ENCODE measurements at regions of chr18 and their contacts with region 1.

Region 1: DNA sequence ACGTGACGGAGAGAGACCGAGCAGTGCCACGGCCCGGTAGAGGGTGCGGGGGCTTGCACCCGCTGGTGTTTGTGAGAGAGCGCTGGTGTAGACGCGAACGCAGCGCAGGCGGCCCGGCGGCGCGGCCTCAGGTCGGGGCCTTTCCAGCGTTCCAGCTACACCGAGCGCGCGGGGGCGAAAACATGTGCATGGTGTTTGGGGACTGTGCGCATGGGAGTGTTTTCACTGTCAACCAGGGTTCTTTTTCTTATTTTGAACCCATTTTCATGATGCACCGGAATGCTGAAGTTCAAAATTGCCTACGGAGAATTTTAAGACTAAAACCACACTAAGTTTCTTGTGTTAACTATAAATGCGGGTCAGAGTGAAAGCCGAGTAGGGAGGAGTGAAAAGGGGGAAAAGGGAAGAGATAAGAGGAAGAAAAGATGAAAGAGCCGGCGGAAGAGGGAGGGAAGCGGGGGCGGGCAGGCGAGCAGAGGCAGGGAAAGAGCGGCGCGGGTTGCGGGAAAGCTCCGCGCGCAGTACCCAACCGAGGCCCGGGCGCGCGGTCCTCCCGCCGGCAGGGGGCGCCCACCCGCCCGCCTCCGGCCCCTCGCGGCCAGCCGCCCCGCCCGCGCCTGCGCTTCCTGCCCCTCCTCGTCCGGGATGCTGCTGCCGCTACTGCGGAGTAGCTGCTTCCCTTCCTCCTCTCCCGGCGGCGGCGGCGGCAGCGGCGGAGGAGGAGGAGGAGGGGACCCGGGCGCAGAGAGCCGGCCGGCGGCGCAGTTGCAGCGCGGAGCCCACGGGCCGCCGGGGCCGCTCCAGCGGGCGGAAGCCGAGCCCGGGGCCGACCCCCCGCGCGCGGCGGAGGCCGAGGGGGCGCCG is at the start of gene RAB12:
- DNase-seq: peak; percentile 87 to 91
- ATAC-seq: peak; percentile 87 to 97 (median 90)
- H3K4me3 ChIP-seq: peak within 1 kb of the TSS; percentile 68 to 97 (median 90)
- H3K27ac ChIP-seq: peak within 1 kb of the TSS; percentile 71 to 89 (median 81)
- H3K4me1 ChIP-seq: peaks cover 0 to 52% (median 37%) of the 10 kb centered on the region in 9 donors
- H3K27me3 ChIP-seq: no peaks in the 10 kb centered on the region
- CTCF ChIP-seq: peak; percentile 53 to 93 (median 72)
- total RNA-seq, gene RAB12: 90.1 to 121 (median 106) TPM

Region 2: DNA sequence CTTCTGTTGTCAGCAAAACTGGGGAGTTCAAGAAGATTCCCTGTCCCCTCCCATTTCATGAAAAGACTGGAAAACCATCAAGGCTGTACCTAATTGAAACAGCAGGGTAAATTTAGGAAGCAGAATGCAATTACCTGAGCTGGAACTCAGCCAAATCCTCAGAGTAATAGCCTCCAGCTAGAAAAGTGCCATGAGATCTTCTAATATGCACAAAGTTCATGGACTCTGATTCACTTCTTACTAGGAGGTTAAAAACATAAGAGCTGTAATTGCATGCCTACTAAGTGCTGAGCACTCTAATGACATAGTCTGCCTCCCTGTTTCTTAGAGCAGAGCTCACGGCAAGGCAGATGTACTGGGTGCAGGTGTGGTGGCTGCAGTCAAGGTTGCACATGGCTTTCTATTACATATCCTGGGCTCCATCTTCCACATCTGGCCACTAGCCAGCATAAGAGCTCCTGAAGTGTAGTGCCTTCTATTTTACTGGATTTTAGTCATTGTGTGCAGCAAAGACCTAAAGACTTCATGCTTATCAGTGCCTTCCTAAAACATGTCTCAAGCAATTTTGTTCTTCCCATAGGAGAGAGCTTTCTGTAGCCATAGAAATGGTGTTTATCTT is 700.2 kb before region 1 on chr18:
- intact Hi-C with region 1: no loop called
- DNase-seq: no peak
- ATAC-seq: peak in 1 of 8 donors; percentile 29
- H3K4me3 ChIP-seq: no peak overlapping the region
- H3K27ac ChIP-seq: no peak overlapping the region
- H3K4me1 ChIP-seq: peaks cover 0 to 27% (median 3%) of the 10 kb centered on the region in 9 donors
- H3K27me3 ChIP-seq: no peaks in the 10 kb centered on the region
- CTCF ChIP-seq: no peak

Region 3: DNA sequence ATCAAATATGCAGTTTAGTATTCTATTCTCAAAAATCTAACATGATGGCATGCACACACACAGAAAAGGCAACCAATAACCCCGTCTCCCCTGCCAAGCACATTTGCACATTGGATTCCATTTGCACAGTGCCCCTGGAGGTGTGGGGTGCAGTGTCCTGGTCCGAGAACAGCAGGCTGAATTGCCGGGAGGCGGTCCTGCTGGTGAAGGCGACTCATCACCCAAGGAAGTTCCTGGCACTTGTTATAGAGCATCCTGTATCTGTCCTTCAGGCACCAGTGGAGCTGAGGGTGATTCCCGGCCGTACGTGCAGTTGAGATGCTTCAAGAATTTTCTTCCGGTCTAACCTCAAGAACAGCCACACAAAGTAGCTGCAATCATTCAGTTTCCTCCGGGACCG is 72.8 kb before region 1 on chr18:
- intact Hi-C with region 1: no loop called
- DNase-seq: no peak
- ATAC-seq: no peak
- H3K4me3 ChIP-seq: no peak overlapping the region
- H3K27ac ChIP-seq: no peak overlapping the region
- H3K4me1 ChIP-seq: no peaks in the 10 kb centered on the region
- H3K27me3 ChIP-seq: no peaks in the 10 kb centered on the region
- CTCF ChIP-seq: no peak

Region 4: GRCh38 chr18:8559612-8560186 is 49.3 kb before region 1 on chr18:
- intact Hi-C with region 1: loop called in 1 of 10 experiments (anchors 5 kb)
- DNase-seq: no peak
- ATAC-seq: no peak
- H3K4me3 ChIP-seq: no peak overlapping the region
- H3K27ac ChIP-seq: no peak overlapping the region
- H3K4me1 ChIP-seq: peaks cover 0 to 33% (median 7%) of the 10 kb centered on the region in 9 donors
- H3K27me3 ChIP-seq: no peaks in the 10 kb centered on the region
- CTCF ChIP-seq: no peak

Region 5: DNA sequence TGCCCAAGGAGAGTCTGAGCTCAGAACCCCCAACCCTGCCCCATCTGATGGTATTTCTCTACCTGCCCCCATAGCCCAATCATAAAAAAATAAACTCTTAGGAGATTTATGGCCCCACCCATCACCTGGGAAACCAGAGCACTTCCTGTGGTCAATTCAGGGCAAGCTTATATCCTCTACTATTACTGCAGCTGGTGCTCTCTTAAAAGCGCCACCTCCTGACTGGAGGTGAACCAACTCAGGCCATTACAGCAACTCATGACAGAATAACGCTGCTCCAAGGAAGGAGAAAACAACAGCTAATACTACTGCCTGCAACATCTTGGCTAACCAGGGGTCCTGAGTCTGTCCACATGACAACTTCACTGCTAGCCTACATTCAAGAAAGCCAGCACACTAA is 292.0 kb after region 1 on chr18:
- intact Hi-C with region 1: no loop called
- DNase-seq: no peak
- ATAC-seq: no peak
- H3K4me3 ChIP-seq: no peak overlapping the region
- H3K27ac ChIP-seq: no peak overlapping the region
- H3K4me1 ChIP-seq: no peaks in the 10 kb centered on the region
- H3K27me3 ChIP-seq: no peaks in the 10 kb centered on the region
- CTCF ChIP-seq: no peak